Activated CD4-positive, alpha-beta T cell treated with anti-CD3 and anti-CD28 coated beads for 36 hours (primary cell): ENCODE measurements at regions of chr14 and their contacts with region 1.

Region 1: DNA sequence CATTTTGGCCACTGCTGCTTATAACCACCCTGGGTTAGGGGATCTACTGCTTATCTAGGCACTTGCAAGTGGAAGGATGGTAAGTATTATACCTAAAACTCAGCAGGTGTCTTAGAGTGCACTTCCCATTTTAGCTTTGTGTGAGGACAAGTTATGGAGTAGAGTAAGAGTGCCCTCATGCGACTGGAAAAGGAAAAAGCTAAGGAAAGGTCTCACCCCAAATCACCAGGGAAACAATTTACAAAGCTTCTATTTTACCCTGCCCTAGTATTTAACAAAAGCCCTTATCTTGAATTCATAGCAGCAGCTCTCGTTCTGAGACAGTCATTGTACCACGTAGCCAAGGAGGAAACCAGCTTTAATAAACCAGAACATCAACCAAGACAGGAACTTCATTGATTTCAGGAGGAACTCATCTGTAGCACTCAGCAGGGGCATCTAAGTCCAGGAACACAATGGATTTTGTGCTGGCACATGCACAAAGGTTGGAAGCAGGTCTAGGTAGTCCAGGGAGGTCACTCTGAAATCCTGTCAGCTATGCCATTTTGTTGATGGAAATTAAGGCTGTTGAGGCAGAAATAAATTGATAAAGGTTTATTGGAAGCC is 2.9 kb downstream of the RDH12 start:
- DNase-seq: peak; percentile 35
- ATAC-seq: peak; percentile 87
- H3K4me3 Mint-ChIP-seq: no peak overlapping the region
- H3K27ac Mint-ChIP-seq: no peak overlapping the region
- H3K4me1 Mint-ChIP-seq: no peaks in the 10 kb centered on the region
- H3K27me3 Mint-ChIP-seq: peaks cover 3% of the 10 kb centered on the region

Region 2: DNA sequence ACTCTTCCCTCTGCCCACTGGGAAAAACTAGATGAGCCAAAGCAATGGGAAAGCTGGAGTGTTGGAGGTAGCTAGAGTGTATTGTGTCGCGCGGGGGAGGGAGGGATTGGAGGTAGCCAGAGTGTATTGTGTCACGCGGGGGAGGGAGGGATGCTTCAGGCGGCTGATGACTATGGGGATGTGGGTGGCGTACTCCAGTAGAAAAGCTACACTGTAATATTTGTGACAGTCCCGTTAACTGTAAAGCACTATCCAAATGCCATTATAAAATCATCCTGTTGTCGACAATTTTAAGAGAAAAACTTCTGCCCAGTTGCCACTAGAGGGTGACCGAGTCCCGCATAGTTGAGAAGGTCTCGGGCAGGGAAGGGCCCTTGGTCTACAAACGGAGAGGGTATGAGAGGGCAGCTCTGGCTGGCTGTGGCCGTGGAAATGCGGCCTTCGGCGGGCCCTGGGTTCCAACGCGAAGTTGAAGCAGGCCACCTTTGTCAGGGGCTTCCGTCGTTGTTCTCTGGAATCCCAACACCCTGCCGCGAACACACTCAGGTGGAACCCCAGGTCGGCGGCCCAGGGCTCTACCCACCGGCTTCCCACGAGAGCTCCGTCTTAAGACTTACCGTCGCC is 277.5 kb before region 1 on chr14:
- CTCF ChIA-PET with region 1: interaction called, 45 read pairs
- POLR2A ChIA-PET with region 1: no interaction called
- intact Hi-C with region 1: loop called (anchors 1 to 2 kb)
- DNase-seq: peak; percentile 85
- ATAC-seq: peak; percentile 98
- H3K4me3 Mint-ChIP-seq: no peak overlapping the region
- H3K27ac Mint-ChIP-seq: no peak overlapping the region
- H3K4me1 Mint-ChIP-seq: no peaks in the 10 kb centered on the region
- H3K27me3 Mint-ChIP-seq: peaks cover 19% of the 10 kb centered on the region

Region 3: DNA sequence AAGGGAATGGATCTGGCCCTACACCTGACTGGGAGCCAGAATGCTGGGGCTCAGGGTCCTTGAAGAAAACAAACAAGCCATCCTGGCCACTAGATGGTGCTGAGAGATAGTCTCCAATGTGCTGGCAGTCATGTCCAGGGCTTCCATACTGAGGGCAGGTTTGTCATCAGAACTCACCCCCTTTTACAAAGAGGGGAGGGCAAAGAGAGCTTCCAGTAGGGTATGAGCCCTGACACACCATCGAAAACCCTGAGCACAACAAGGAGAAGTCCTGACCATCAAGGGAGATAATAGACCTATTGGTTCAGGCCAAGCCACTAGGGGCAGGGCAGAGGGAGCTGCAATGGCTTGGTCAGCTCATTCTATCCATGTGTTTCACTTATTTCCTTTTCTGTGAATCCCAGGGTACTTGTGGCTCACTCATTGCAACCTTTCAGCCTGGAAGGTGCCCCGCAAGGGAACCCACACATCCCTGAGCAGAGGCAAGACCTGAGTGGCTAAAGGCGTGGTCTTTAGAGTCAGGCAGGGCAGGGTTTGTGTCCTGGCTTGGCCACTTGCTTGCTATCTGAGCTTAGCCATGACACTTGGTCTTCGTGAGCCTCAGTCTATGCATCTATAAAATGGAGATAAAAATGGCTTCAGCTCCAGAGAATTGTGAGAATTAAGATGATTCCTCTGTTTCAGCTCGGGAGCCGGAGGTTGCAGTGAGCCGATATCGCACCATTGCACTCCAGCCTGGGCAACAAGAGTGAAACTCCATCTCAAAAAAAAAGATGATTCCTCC is 177.7 kb before region 1 on chr14:
- CTCF ChIA-PET with region 1: interaction called, 14 read pairs
- POLR2A ChIA-PET with region 1: no interaction called
- intact Hi-C with region 1: loop called (anchors 1 kb)
- DNase-seq: peak; percentile 60
- ATAC-seq: peak; percentile 91
- H3K4me3 Mint-ChIP-seq: no peak overlapping the region
- H3K27ac Mint-ChIP-seq: no peak overlapping the region
- H3K4me1 Mint-ChIP-seq: no peaks in the 10 kb centered on the region
- H3K27me3 Mint-ChIP-seq: peaks cover 12% of the 10 kb centered on the region

Region 4: DNA sequence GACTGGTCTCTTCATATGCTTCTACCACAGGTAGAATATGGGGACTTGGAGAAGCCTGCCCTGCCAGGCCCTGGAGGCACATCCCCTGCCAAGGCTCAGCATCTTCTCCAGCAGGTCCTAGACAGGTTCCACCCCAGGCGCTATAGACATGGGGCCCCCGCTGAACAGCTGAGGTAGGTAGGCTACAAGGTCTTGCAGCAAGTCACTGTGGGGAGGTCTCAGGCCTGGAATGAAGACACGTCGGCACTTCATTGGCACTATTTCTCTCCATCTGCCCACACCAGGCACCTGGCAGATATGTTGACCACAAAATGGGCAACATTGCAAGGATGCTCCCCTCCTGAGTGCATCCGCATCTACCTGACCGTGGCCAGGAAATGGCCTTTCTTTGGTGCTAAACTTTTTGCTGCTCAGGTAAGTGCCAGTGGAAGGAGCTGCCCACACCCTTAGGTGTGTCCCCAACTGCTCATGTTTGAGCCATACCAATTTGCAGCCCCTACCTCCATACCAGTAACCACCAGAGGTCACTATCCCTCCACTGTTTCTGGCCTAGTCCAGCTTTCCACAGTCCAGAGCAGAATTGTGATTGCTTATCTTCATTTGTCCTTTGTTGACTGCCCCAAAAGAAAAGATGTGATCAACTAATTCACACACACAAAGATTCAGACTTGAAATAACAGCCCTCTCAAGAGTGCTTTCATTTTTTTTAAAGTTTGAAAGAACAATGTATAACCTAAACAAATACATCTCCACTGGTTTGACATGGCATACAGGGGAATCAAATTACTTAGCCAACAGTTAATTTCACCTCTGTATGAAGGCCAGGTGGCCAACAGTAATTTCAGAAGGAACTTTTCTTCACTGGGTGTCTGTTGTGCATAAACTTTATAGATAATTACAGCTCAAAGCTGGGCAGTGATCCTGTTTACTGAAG is 120.6 kb before region 1 on chr14:
- CTCF ChIA-PET with region 1: interaction called, 59 read pairs
- POLR2A ChIA-PET with region 1: interaction called, 3 read pairs
- intact Hi-C with region 1: loop called (anchors 1 kb)
- DNase-seq: peak; percentile 43
- ATAC-seq: peak; percentile 78
- H3K4me3 Mint-ChIP-seq: no peak overlapping the region
- H3K27ac Mint-ChIP-seq: no peak overlapping the region
- H3K4me1 Mint-ChIP-seq: no peaks in the 10 kb centered on the region
- H3K27me3 Mint-ChIP-seq: no peaks in the 10 kb centered on the region

Region 5: DNA sequence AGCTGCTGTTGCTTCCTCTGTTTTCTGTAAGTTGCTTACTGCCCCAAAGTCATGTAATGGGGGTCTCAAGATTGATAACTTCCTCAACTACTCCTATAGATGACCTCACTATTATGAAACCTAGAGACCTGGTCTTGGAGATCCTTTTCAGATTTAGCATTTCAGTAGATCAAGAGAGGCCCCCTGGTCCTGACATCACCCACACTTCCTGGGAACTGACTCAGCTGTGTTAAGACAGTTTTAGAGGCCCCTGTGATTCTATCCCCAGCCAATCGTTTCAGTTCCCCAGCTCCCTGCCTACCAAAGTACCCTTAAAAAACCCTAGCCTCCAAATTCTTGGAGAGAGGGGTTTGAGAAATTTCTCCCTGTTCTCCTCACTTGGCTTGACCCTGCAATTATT is 94.1 kb before region 1 on chr14:
- CTCF ChIA-PET with region 1: interaction called, 13 read pairs
- POLR2A ChIA-PET with region 1: interaction called, 6 read pairs
- intact Hi-C with region 1: no loop called
- DNase-seq: peak; percentile 49
- ATAC-seq: peak; percentile 93
- H3K4me3 Mint-ChIP-seq: no peak overlapping the region
- H3K27ac Mint-ChIP-seq: no peak overlapping the region
- H3K4me1 Mint-ChIP-seq: peaks cover 13% of the 10 kb centered on the region
- H3K27me3 Mint-ChIP-seq: no peaks in the 10 kb centered on the region

Region 6: GRCh38 chr14:67619446-67620216 is 85.0 kb before region 1 on chr14 and contains the start of gene ARG2:
- CTCF ChIA-PET with region 1: interaction called, 87 read pairs
- POLR2A ChIA-PET with region 1: no interaction called
- intact Hi-C with region 1: loop called (anchors 1 kb)
- DNase-seq: peak; percentile 99
- ATAC-seq: peak; percentile 88
- H3K4me3 Mint-ChIP-seq: peak within 1 kb of the TSS; percentile 77
- H3K27ac Mint-ChIP-seq: peak within 1 kb of the TSS; percentile 73
- H3K4me1 Mint-ChIP-seq: peaks cover 31% of the 10 kb centered on the region
- H3K27me3 Mint-ChIP-seq: peaks cover 8% of the 10 kb centered on the region
- total RNA-seq, gene ARG2: 11.9 TPM

Region 7: DNA sequence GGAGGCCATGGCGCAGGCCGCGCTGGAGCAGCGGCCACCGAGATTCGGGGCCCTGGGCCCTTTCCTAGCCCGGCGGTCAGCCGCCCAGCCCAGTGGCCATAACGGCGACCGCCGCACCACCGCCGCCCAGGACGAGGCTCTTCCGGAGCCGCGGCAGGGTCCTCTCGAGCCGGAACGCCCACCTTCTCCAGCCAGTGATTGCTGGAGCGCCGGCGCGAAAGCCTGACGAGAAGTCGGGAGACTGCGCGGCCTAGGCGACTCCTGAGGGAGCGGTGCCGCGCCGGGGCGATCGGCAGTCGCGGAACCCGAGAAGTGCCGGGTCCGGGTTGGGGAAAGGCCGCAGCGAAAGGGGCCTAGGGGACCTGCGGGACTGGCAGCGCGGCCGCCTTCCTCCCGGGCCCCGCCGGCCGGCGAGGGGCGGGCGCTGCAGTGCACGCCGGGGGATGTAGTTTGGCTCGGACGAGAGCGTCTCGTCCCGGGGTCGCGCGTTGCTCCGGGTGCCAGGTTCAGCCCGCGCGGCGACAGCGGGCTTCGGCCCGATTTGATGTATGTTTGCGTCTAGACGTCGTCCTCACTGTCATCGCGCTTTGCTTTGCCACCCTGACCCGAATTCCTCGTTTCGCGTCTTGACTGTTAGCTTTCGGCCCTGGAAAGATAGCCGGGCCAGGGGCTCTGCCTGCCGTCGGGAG is 30.0 kb before region 1 on chr14 and contains the start of gene VTI1B:
- CTCF ChIA-PET with region 1: interaction called, 20 read pairs
- POLR2A ChIA-PET with region 1: no interaction called
- intact Hi-C with region 1: loop called in 1 of 2 experiments (anchors 5 kb)
- DNase-seq: peak; percentile 83
- ATAC-seq: peak; percentile 94
- H3K4me3 Mint-ChIP-seq: peak within 1 kb of the TSS; percentile 81
- H3K27ac Mint-ChIP-seq: peak within 1 kb of the TSS; percentile 82
- H3K4me1 Mint-ChIP-seq: peaks cover 32% of the 10 kb centered on the region
- H3K27me3 Mint-ChIP-seq: no peaks in the 10 kb centered on the region
- total RNA-seq, gene VTI1B: 42.0 to 58.3 TPM